Esophagus squamous epithelium (tissue), 5 donors: ENCODE measurements at regions of chr10 and their contacts with region 1.

Region 1: GRCh38 chr10:80500572-80501380 is 36.9 kb upstream of the SH2D4B start:
- DNase-seq: no peak
- H3K4me3 ChIP-seq: peak overlapping the region in 1 of 4 donors; percentile 0
- H3K27ac ChIP-seq: peak overlapping the region; percentile 83 to 97 (median 90)
- H3K4me1 ChIP-seq: peaks cover 80 to 100% (median 99%) of the 10 kb centered on the region in 3 donors
- H3K27me3 ChIP-seq: no peaks in the 10 kb centered on the region
- CTCF ChIP-seq: peak in 4 of 6 experiments; percentile 7 to 42 (median 12)
- POLR2A ChIP-seq: no peak

Region 2: DNA sequence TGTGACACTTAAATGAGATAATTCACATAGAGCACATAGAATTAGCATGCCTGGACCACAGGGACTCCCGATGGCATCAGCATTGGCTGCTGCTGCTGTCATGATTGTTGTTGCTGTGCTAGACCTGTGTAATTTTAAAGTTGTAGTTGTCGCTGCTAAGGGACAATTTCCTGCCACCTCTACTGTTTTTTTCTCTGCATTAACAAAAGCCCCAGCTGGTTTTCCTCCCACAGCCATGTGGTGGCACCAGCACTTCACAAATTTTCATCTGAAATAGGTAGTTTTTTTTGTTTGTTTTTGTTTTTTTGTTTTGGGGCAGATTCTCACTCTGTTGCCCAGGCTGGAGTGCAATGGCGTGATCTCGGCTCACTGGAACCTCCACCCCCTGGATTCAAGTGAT is 117.8 kb before region 1 on chr10:
- intact Hi-C with region 1: loop called (anchors 10 kb)
- DNase-seq: no peak
- H3K4me3 ChIP-seq: no peak overlapping the region
- H3K27ac ChIP-seq: no peak overlapping the region
- H3K4me1 ChIP-seq: peaks cover 0 to 16% (median 0%) of the 10 kb centered on the region in 3 donors
- H3K27me3 ChIP-seq: no peaks in the 10 kb centered on the region
- CTCF ChIP-seq: peak in 5 of 6 experiments; percentile 44 to 73 (median 60)
- POLR2A ChIP-seq: no peak

Region 3: DNA sequence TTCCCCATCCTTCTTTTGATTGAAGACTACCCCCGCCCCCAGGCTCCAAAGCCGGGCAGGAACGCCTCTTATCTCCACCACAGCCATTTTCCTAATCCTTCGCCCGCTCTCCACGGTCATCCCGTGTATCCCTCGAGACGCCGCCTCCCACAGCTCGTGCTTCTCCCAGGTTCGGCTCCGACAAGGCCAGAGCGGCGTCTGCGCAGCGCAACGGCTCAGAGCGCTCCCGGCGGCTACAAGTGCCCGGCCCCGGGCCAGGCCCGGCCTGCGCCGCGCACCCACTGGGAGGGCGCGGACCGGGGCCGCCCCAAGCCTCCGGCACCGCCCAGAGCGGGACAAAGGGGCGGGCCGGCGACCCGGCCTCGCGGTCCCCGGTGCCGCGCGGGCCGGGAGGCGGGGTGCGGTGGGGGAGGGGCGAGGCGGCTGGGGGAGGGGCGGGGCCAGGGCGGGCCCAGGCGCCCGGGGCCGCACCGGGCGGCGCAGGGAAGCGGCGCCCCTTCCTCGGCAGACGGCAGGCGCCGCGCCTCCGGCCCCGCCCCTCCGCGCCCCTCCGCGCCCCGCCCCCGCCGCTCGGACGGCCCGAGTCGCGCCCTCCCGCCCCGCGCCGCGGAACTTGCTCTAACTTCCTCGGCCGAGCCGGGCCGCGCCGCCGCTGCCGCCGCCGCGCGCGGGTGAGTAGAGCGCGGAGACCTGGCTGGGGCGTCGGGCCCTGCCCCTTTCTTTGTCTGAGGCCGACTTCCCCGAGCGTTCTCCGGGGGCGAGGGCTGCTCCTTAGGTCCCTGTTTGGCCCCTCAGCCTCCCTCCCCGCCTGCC is 46.9 kb before region 1 on chr10 and contains the start of gene TSPAN14:
- intact Hi-C with region 1: loop called (anchors 5 kb)
- DNase-seq: peak; percentile 44
- H3K4me3 ChIP-seq: peak within 1 kb of the TSS; percentile 84 to 100 (median 100)
- H3K27ac ChIP-seq: peak within 1 kb of the TSS; percentile 96 to 100 (median 99)
- H3K4me1 ChIP-seq: peaks cover 39 to 54% (median 44%) of the 10 kb centered on the region in 3 donors
- H3K27me3 ChIP-seq: no peaks in the 10 kb centered on the region
- CTCF ChIP-seq: peak in 1 of 6 experiments; percentile 11
- POLR2A ChIP-seq: peak in 3 of 4 donors; percentile 13 to 85 (median 85)
- total RNA-seq, gene TSPAN14: 66.4 to 118 (median 89.8) TPM